Naive thymus-derived CD4-positive, alpha-beta T cell (primary cell): ENCODE measurements at regions of chrX and their contacts with region 1.

Region 1: DNA sequence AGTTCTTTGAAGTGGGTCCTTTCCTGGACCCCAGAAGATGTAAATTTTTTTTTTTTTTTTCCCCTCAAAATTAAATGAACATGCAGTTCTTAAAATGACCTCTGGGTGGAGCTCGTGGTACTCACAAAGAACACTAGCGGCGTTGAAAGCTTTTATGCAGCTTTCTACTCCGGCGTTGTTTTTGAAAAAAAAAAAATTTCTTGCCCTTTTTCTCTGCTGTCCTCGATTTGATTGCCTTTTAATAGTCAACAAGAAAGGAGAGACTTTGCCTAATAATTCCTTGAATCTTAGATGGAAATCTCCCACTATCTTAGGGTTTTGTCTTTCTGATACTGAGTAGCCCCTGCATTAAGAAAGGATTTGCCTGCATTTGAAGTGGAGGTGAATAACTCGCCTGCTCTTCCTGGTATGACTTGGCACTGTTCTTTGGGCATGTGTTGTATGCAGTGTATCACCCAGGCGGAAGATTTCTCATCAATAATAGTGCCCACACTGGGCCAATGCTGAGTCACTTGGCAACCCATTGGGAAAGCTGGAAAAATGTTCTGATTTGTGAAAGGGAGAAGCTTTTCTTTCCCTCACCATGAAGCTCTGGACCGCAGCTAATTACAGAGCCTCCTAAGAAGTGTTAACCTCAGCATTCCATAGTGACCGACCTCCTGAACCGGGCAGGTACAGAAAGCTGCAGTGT is 104.0 kb downstream of the PHEX start:
- DNase-seq: peak in 6 of 9 donors; percentile 15 to 55 (median 45)
- ATAC-seq: peak; percentile 58
- H3K4me3 ChIP-seq: no peak overlapping the region
- H3K4me3 Mint-ChIP-seq: peak overlapping the region in 7 of 10 donors; percentile 57 to 77 (median 68)
- H3K27ac ChIP-seq: no peak overlapping the region
- H3K27ac Mint-ChIP-seq: no peak overlapping the region
- H3K4me1 ChIP-seq: no peaks in the 10 kb centered on the region
- H3K4me1 Mint-ChIP-seq: peaks cover 0 to 11% (median 6%) of the 10 kb centered on the region in 7 donors
- H3K27me3 ChIP-seq: no peaks in the 10 kb centered on the region
- H3K27me3 Mint-ChIP-seq: no peaks in the 10 kb centered on the region

Region 2: GRCh38 chrX:22192417-22193060 is 56.4 kb after region 1 on chrX:
- CTCF ChIA-PET with region 1: interaction called, 3 read pairs
- POLR2A ChIA-PET with region 1: no interaction called
- intact Hi-C with region 1: loop called (anchors 1 to 2 kb)
- DNase-seq: peak in 8 of 9 donors; percentile 4 to 49 (median 34)
- ATAC-seq: peak; percentile 70
- H3K4me3 ChIP-seq: no peak overlapping the region
- H3K4me3 Mint-ChIP-seq: no peak overlapping the region
- H3K27ac ChIP-seq: no peak overlapping the region
- H3K27ac Mint-ChIP-seq: no peak overlapping the region
- H3K4me1 ChIP-seq: no peaks in the 10 kb centered on the region
- H3K4me1 Mint-ChIP-seq: peaks cover 0 to 5% (median 2%) of the 10 kb centered on the region in 7 donors
- H3K27me3 ChIP-seq: no peaks in the 10 kb centered on the region
- H3K27me3 Mint-ChIP-seq: peaks cover 0 to 5% (median 0%) of the 10 kb centered on the region in 5 donors

Region 3: DNA sequence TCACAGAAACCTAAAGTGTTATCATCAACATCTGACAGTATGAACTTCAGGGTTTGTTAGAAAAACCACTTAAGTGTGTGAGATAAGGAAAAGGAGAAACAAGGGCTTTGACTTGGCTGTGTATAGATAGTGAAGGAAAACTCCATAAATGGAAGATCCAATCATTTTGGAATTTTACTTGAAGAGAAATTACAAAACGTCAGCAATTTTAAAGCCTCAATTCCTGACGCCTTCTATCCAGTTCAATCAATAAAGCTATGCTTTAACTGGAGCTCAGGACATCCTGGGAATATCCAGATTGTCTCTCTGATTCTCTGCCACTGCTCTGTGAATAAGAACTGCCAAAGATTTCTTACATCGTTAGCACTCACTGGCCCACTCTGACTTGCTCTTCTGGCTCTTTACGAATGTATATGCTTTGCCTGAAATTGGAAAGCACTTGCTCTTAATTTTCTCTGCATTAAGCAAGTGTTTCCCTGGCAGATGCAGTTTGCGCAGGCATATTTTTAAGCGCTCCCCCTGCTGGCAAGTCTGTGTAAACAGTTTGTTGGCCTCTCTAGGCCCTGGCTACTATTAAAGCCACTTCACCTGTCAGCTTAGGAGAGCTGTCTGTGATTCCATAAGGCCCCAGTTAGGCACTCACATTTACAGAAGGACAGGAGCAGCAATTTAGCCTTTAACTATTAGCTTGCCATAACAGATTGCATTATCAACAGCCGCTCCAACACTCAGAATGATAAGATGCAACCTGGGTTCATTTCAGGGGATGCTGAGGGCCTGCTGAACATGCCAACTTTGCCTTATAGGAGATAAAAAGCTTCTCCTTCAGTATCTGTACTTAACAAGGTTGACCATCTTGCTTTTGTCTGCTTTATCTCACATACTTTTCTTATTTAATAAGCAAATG is 612.2 kb after region 1 on chrX:
- CTCF ChIA-PET with region 1: no interaction called
- POLR2A ChIA-PET with region 1: no interaction called
- intact Hi-C with region 1: loop called in 1 of 2 experiments (anchors 1 kb)
- DNase-seq: peak in 7 of 9 donors; percentile 2 to 44 (median 26)
- ATAC-seq: no peak
- H3K4me3 ChIP-seq: no peak overlapping the region
- H3K4me3 Mint-ChIP-seq: no peak overlapping the region
- H3K27ac ChIP-seq: no peak overlapping the region
- H3K27ac Mint-ChIP-seq: no peak overlapping the region
- H3K4me1 ChIP-seq: no peaks in the 10 kb centered on the region
- H3K4me1 Mint-ChIP-seq: no peaks in the 10 kb centered on the region
- H3K27me3 ChIP-seq: no peaks in the 10 kb centered on the region
- H3K27me3 Mint-ChIP-seq: no peaks in the 10 kb centered on the region